Psoas muscle (tissue), 8 donors: ENCODE measurements at regions of chr1 and their contacts with region 1.

Region 1: DNA sequence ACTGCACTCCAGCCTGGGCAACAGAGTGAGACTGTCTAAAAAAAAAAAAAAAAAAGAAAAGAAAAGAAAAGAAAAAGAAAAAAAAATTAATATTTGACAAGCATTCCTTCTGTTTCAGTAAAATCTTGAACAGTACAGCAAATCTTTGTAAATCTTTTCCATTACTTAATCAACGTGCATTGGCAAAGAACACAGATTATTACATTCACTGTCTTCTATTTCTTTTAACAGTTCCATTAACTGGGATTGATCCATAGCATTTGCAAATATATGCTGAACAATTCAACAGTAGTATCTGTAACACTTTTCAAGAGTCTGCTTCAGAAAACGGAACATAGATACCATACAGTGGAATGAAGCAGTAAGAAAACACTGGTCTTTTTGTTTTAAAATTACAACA is 9.8 kb downstream of the SAMD13 start:
- DNase-seq: no peak
- ATAC-seq: no peak
- H3K4me3 ChIP-seq: no peak overlapping the region
- H3K27ac ChIP-seq: no peak overlapping the region
- H3K4me1 ChIP-seq: no peaks in the 10 kb centered on the region
- H3K27me3 ChIP-seq: no peaks in the 10 kb centered on the region
- CTCF ChIP-seq: no peak

Region 2: DNA sequence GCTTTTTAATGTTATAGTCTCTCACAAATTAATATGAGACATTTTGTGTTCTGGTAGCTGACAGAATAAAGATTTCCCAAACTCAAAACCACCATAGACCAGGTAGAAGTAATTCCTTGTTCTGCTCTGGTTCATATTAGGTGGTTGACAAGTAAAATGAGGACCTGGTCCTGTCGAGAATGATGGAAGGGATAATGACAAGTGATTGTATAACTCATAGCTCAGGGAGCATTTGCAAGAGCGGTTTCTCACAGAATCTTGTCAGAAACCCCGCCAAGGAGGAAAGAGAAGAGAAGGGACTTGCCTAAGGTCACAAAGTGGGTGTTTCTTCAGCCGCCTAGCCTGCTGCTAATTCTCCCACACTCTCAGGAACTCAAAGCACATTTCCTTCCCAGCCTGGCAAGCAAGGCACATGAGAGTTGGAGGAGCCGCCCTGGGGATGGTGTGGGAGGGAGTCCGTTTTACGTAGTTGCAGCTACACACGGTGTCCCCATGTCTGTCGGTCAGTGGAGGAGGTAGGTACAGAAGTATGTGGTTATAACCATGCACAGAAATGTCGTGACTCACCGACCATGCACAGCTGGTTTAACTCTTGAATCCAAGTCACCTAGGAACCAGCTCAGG is 36.7 kb after region 1 on chr1:
- intact Hi-C with region 1: loop called in 1 of 2 experiments (anchors 5 kb)
- DNase-seq: no peak
- ATAC-seq: peak in 3 of 4 donors; percentile 23 to 50 (median 29)
- H3K4me3 ChIP-seq: peak overlapping the region; percentile 38
- H3K27ac ChIP-seq: no peak overlapping the region
- H3K4me1 ChIP-seq: peaks cover 12% of the 10 kb centered on the region
- H3K27me3 ChIP-seq: no peaks in the 10 kb centered on the region
- CTCF ChIP-seq: no peak